Posterior vena cava (tissue), 2 donors: ENCODE measurements at regions of chr5 and their contacts with region 1.

Region 1: GRCh38 chr5:105150315-105150714 is 1587.7 kb upstream of the NUDT12 start:
- DNase-seq: no peak

Region 2: GRCh38 chr5:106076655-106077054 is 926.3 kb after region 1 on chr5:
- intact Hi-C with region 1: loop called in 1 of 2 experiments (anchors 5 kb)
- DNase-seq: no peak